ENCODE measurements at regions of chr22 and their contacts with region 1.

Region 1: GRCh38 chr22:42070517-42071422 is at the start of gene NAGA:
- DNase-seq: peak; percentile 98
- H3K4me3 Mint-ChIP-seq: peak within 1 kb of the TSS; percentile 93
- H3K27ac Mint-ChIP-seq: peak within 1 kb of the TSS; percentile 93
- H3K4me1 Mint-ChIP-seq: peaks cover 39% of the 10 kb centered on the region
- H3K27me3 Mint-ChIP-seq: no peaks in the 10 kb centered on the region
- total RNA-seq, gene NAGA: 28.2 and 29.9 TPM in 2 replicates

Region 2: GRCh38 chr22:41946629-41947423 is 123.9 kb before region 1 on chr22 and contains the start of gene CENPM:
- intact Hi-C with region 1: loop called (anchors 2 kb)
- DNase-seq: peak; percentile 98
- H3K4me3 Mint-ChIP-seq: peak within 1 kb of the TSS; percentile 94
- H3K27ac Mint-ChIP-seq: peak within 1 kb of the TSS; percentile 94
- H3K4me1 Mint-ChIP-seq: peaks cover 47% of the 10 kb centered on the region
- H3K27me3 Mint-ChIP-seq: no peaks in the 10 kb centered on the region
- total RNA-seq, gene CENPM: 86.9 and 88.6 TPM in 2 replicates

Region 3: GRCh38 chr22:41966607-41967240 is 104.0 kb before region 1 on chr22:
- intact Hi-C with region 1: loop called (anchors 2 kb)
- DNase-seq: peak; percentile 85
- H3K4me3 Mint-ChIP-seq: no peak overlapping the region
- H3K27ac Mint-ChIP-seq: no peak overlapping the region
- H3K4me1 Mint-ChIP-seq: peaks cover 6% of the 10 kb centered on the region
- H3K27me3 Mint-ChIP-seq: no peaks in the 10 kb centered on the region

Region 4: DNA sequence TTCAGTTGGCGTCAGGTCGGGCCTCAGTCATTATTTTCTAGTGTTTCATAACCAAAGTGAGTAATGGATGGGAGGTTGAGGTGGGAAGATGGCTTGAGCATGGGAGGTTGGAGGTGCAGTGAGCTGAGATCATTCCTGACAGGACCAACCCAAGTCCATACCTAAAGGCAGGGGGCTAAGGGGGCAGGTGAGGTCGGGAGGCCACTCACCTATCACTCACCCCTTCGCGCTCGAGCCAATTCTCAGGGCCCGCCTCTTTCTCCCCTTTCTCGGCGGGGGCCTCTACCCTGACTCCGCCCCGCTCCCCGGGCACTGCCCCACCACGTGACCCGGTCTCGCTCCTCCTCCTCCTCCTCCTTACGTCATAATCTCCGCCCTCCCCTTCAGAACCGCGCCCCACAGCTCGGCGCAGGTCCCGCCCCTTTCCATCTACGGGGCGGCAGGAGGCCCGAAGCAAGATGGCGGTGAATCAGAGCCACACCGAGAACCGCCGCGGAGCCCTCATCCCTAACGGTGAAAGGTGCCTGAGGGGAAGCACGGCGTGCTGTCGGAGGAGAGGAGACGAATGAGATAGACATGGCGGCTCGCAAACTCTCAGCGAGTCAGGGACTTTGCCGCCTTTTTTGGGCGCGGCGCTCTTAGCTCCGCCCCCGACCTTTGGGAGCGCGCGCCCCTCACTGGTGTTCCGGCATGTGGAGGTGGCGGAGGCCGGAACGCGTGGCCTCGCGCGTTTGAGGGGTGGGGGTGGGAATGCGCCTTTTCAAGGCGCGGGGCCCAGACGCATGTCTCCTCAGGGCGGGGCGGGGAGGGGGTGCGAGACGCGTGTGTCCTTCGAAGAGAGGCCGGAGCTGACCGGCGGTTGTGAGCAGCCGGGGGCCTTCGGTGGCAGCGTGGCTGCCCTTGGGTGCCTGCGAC is 72.2 kb before region 1 on chr22 and contains the start of gene WBP2NL:
- intact Hi-C with region 1: loop called (anchors 2 kb)
- DNase-seq: peak; percentile 97
- H3K4me3 Mint-ChIP-seq: peak within 1 kb of the TSS; percentile 95
- H3K27ac Mint-ChIP-seq: peak within 1 kb of the TSS; percentile 99
- H3K4me1 Mint-ChIP-seq: peaks cover 23% of the 10 kb centered on the region
- H3K27me3 Mint-ChIP-seq: no peaks in the 10 kb centered on the region
- total RNA-seq, gene WBP2NL: 1.3 and 1.4 TPM in 2 replicates

Region 5: DNA sequence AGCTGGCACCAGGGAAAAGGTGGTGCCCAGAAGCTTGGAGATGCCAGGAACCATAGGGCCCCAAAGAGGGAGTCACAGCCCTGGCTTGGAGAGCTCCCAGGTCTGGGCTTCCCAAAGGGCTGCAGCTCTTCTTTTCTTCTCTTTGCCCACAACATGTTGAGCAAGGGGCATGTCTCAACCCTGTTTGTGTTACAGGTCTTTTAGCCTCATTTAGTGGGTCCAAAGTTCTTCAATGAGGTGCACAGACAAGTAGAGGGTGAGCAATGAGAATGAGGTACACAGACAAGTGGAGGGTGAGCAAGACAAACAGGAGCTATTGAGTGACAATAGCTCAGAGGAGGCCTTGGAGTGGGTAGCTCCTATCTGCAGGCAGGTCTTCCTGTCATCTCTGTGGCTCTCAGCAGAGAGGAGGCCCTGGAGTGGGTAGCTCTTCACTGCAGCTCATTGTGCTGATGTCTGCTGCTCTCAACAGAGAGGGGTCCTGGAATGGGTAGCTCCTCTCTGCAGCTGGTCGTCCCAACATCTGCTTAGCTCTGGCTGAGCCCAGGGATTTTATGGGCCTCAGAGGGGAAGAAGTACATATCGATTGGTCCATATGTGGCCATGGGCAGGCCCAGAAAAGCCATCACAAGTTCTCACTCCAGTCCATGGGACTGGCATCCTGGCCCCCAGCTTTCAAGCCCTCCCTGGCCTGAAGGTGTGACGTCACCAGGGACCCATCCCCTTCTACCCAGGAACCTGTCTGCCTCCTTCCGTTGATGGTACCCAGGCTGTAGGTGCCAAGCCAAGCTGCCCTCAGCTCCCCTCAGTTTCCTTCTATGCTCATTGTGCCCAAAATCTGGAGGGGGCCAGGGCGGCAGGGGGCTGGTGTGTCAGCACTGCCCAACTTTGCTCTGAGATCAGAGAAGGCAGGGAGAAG is 37.2 kb before region 1 on chr22:
- intact Hi-C with region 1: loop called (anchors 2 kb)
- DNase-seq: no peak
- H3K4me3 Mint-ChIP-seq: no peak overlapping the region
- H3K27ac Mint-ChIP-seq: peak overlapping the region; percentile 8
- H3K4me1 Mint-ChIP-seq: peaks cover 27% of the 10 kb centered on the region
- H3K27me3 Mint-ChIP-seq: peaks cover 4% of the 10 kb centered on the region